H1 (cell line): ENCODE measurements at regions of chr19 and their contacts with region 1.

Region 1: DNA sequence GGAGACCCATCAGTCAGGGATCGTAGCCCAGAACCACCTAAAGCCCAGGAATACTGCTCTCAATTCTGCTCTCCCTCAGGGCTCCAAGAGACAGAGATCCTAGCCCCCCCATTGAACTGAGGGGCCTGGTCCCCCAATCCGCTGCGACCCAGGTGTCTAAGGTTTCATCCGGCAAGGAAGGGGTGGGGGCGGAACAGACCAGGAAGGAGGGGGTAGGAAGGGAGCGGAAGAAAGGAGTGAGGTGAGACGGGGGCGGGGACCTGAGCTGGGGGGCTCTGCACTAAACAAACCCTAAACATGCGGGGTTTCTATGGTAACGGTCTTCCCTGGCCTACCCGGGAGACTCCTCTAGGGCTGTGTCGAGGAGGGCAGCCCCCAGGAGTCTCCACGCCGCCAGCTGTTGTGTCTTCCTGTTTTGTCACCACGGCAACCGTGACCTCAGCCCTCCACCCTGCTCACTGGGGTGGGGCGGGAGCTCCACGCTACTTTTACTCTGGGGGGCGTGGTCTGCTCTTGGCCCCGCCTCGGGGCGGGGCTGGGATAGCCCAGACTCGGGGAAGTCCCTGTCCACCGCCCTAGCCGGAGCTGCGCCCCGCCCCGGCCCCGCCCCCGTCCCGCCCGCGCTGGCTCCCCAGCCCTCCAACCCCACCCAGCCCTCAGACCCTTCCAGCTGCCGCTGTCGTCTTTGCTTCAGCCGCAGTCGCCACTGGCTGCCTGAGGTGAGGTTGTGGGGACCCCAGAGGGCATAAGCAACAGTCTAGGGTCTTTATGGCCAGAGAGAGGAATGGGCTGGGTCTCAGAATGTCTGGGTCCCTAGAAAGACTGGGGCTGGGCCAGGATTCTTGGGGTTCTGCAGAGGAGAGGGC is at the start of gene MYADM:
- DNase-seq: peak; percentile 96 to 100
- H3K4me3 ChIP-seq: peak within 1 kb of the TSS; percentile 69 to 94 (median 79)
- H3K27ac ChIP-seq: peak within 1 kb of the TSS; percentile 96
- H3K4me1 ChIP-seq: peaks cover 0 to 13% (median 8%) of the 10 kb centered on the region in 4 experiments; a peak in 6 of 7 replicates
- H3K27me3 ChIP-seq: no peaks in the 10 kb centered on the region
- CTCF ChIP-seq: no peak
- EP300 ChIP-seq: peak; percentile 85 to 99
- POLR2A ChIP-seq: peak in 1 of 2 experiments; percentile 72; a peak in 2 of 3 replicates
- RAD21 ChIP-seq: no peak
- total RNA-seq, gene MYADM: 70.1 and 70.5 TPM in 2 replicates

Region 2: DNA sequence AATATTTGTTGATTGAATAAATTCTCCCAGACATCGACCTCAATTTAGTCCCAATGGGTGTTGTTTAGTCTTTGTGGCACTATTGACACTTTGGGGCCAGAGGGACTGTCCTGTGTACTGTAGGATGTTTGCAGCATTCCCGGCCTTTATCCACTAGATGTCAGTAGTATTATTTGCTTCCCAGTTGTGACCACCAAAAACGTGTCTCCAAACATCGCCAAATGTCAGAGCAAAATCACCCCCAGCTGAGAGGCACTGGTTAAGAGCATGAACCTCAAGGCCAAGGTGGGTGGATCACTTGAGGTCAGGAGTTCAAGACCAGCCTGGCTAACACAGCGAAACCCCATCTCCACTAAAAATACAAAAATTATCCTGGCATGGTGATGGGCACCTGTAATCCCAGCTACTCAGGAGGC is 58.7 kb before region 1 on chr19:
- CTCF ChIA-PET with region 1: interaction called, 23 read pairs
- POLR2A ChIA-PET with region 1: interaction called, 6 read pairs
- DNase-seq: no peak
- H3K4me3 ChIP-seq: no peak overlapping the region
- H3K27ac ChIP-seq: no peak overlapping the region
- H3K4me1 ChIP-seq: no peaks in the 10 kb centered on the region; a peak in 1 of 7 replicates
- H3K27me3 ChIP-seq: peaks cover 0 to 5% (median 1%) of the 10 kb centered on the region in 4 experiments; a peak in 4 of 7 replicates
- CTCF ChIP-seq: peak in 2 of 3 experiments; percentile 68 to 77; a peak in 3 of 4 replicates
- EP300 ChIP-seq: no peak
- POLR2A ChIP-seq: no peak
- RAD21 ChIP-seq: peak; percentile 84 to 87

Region 3: DNA sequence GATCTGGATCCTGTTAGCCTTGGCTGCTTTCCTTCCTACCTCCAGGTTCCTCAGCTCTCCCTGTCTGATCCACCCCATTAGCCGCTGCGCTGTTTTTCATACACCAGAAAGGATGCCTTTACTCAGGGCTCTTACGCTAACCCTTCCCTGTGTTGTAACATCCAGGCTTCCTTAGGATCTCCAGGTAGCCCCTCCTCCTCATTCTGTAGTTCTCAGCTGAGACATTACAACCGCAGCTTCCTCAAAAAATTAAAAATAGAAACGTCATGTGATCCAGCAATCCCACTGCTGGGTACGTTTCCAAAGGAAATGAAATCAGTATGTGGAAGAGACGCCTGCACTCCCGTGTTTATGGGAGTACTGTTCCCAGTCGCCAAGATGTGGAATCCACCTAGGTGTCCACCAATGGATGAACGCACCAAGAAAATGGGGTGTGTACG is 18.2 kb before region 1 on chr19:
- CTCF ChIA-PET with region 1: interaction called, 17 read pairs
- POLR2A ChIA-PET with region 1: interaction called, 137 read pairs
- DNase-seq: no peak
- H3K4me3 ChIP-seq: no peak overlapping the region
- H3K27ac ChIP-seq: no peak overlapping the region
- H3K4me1 ChIP-seq: 0 out of 7 replicates have a peak, but pooled peaks cover 0 to 2% (median 0%) of the 10 kb centered on the region in 4 experiments
- H3K27me3 ChIP-seq: no peaks in the 10 kb centered on the region
- CTCF ChIP-seq: no peak
- EP300 ChIP-seq: no peak
- POLR2A ChIP-seq: no peak
- RAD21 ChIP-seq: no peak

Region 4: DNA sequence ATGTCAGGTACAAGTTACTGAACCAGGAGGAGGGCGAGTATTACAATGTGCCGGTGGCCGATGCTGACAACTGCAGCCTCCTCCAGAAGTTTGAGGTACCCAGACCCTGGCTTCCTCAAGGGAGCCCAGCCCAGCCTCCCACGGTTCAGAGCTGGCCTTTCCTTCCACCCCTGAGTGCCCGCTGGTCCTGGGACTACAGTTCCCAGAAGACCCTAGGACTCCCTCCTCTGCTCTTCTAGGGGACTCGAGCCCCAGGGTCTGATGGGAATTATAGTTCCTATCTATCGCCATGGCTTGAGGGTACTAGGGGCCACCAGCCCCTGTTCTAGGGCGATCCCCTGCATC is 25.5 kb after region 1 on chr19:
- CTCF ChIA-PET with region 1: interaction called, 3 read pairs
- POLR2A ChIA-PET with region 1: interaction called, 38 read pairs
- DNase-seq: no peak
- H3K4me3 ChIP-seq: no peak overlapping the region
- H3K27ac ChIP-seq: no peak overlapping the region
- H3K4me1 ChIP-seq: peaks cover 0 to 10% (median 5%) of the 10 kb centered on the region in 4 experiments; a peak in 5 of 7 replicates
- H3K27me3 ChIP-seq: peaks cover 0 to 3% (median 0%) of the 10 kb centered on the region in 4 experiments; a peak in 1 of 7 replicates
- CTCF ChIP-seq: no peak
- EP300 ChIP-seq: no peak
- POLR2A ChIP-seq: no peak
- RAD21 ChIP-seq: no peak

Region 5: GRCh38 chr19:53942001-53942786 is 74.7 kb after region 1 on chr19:
- CTCF ChIA-PET with region 1: interaction called, 8 read pairs
- POLR2A ChIA-PET with region 1: interaction called, 12 read pairs
- DNase-seq: peak; percentile 97 to 100
- H3K4me3 ChIP-seq: peak overlapping the region; percentile 76 to 95 (median 88)
- H3K27ac ChIP-seq: peak overlapping the region; percentile 63; the same call in 1 of the 2 replicates
- H3K4me1 ChIP-seq: peaks cover 4 to 10% (median 7%) of the 10 kb centered on the region in 4 experiments; a peak in 6 of 7 replicates
- H3K27me3 ChIP-seq: no peaks in the 10 kb centered on the region
- CTCF ChIP-seq: peak; percentile 60 to 86 (median 82)
- EP300 ChIP-seq: no peak
- POLR2A ChIP-seq: peak; percentile 55 to 88
- RAD21 ChIP-seq: peak; percentile 46 to 65